Transverse colon (tissue), 4 donors: ENCODE measurements at regions of chr9 and their contacts with region 1.

Region 1: GRCh38 chr9:12813960-12814876 is 39.4 kb downstream of the LURAP1L start:
- DNase-seq: peak; percentile 69
- H3K4me3 ChIP-seq: no peak overlapping the region
- H3K27ac ChIP-seq: peak overlapping the region; percentile 79 to 84 (median 81)
- H3K4me1 ChIP-seq: peaks cover 20 to 85% (median 59%) of the 10 kb centered on the region in 4 donors
- H3K27me3 ChIP-seq: no peaks in the 10 kb centered on the region
- CTCF ChIP-seq: peak; percentile 34 to 71 (median 41)
- EP300 ChIP-seq: no peak
- POLR2A ChIP-seq: no peak

Region 2: DNA sequence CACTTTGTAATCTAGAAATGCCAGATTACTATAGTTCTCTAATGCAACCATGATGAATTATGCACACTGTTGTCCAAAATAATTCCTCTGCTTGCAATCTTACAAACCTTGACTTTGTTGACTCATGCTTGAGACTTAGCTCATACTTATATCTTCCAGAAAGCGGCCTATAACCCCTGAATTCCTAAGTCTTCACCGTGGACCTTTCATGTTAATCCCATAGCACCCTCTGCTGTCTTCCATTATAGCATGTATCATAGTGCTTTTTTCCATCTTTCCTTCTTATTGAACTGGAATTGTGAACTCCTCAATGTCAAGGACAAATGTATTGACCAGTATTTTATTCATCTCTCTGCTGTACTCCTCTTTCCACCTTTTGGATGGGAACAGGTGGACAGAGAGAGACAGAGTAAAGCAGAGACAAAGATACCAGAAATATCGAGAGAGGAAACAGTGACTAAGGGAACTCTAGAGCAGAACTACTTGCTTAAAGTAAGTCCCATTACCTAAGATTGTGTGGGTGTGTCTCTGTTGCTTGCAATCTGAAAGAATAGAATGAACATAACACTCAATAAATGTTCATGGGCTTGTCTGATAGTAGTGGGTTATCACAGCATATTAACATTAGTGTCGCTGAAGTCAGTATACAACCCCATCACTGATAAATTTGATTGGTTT is 70.7 kb after region 1 on chr9:
- in situ Hi-C with region 1: no loop called
- intact Hi-C with region 1: loop called (anchors 10 kb)
- DNase-seq: no peak
- H3K4me3 ChIP-seq: no peak overlapping the region
- H3K27ac ChIP-seq: peak overlapping the region in 1 of 4 donors; percentile 10
- H3K4me1 ChIP-seq: peaks cover 0 to 22% (median 13%) of the 10 kb centered on the region in 4 donors
- H3K27me3 ChIP-seq: no peaks in the 10 kb centered on the region
- CTCF ChIP-seq: peak; percentile 51 to 79 (median 60)
- EP300 ChIP-seq: no peak
- POLR2A ChIP-seq: no peak